ENCODE measurements at regions of chr4 and their contacts with region 1.

Region 1: GRCh38 chr4:166252487-166253402 is 379.7 kb downstream of the TLL1 start:
- DNase-seq: peak; percentile 34
- H3K4me3 ChIP-seq: no peak overlapping the region
- H3K27ac ChIP-seq: no peak overlapping the region
- H3K4me1 ChIP-seq: no peaks in the 10 kb centered on the region
- H3K27me3 ChIP-seq: no peaks in the 10 kb centered on the region
- CTCF ChIP-seq: peak; percentile 54
- POLR2A ChIP-seq: no peak

Region 2: GRCh38 chr4:166128452-166128851 is 124.3 kb before region 1 on chr4:
- CTCF ChIA-PET with region 1: no interaction called
- POLR2A ChIA-PET with region 1: no interaction called
- dilution Hi-C with region 1: no loop called
- intact Hi-C with region 1: loop called (anchors 1 kb)
- DNase-seq: peak; percentile 87
- H3K4me3 ChIP-seq: no peak overlapping the region
- H3K27ac ChIP-seq: no peak overlapping the region
- H3K4me1 ChIP-seq: peaks cover 11% of the 10 kb centered on the region
- H3K27me3 ChIP-seq: no peaks in the 10 kb centered on the region
- CTCF ChIP-seq: no peak
- POLR2A ChIP-seq: no peak

Region 3: GRCh38 chr4:166724369-166724768 is 471.6 kb after region 1 on chr4:
- CTCF ChIA-PET with region 1: no interaction called
- POLR2A ChIA-PET with region 1: no interaction called
- dilution Hi-C with region 1: no loop called
- intact Hi-C with region 1: no loop called
- DNase-seq: no peak
- H3K4me3 ChIP-seq: no peak overlapping the region
- H3K27ac ChIP-seq: no peak overlapping the region
- H3K4me1 ChIP-seq: no peaks in the 10 kb centered on the region
- H3K27me3 ChIP-seq: no peaks in the 10 kb centered on the region
- CTCF ChIP-seq: no peak
- POLR2A ChIP-seq: no peak